Activated B cell treated with CpG ODN at 0.5 μM for 24 hours (primary cell): ENCODE measurements at regions of chr1 and their contacts with region 1.

Region 1: GRCh38 chr1:150578965-150579798 is at the start of gene MCL1:
- DNase-seq: peak; percentile 81
- ATAC-seq: peak; percentile 82
- H3K4me3 Mint-ChIP-seq: peak within 1 kb of the TSS; percentile 95
- H3K27ac Mint-ChIP-seq: peak within 1 kb of the TSS; percentile 98
- H3K4me1 Mint-ChIP-seq: peaks cover 49% of the 10 kb centered on the region
- H3K27me3 Mint-ChIP-seq: no peaks in the 10 kb centered on the region
- CTCF ChIP-seq: no peak
- total RNA-seq, gene MCL1: 224 and 233 TPM in 2 replicates

Region 2: DNA sequence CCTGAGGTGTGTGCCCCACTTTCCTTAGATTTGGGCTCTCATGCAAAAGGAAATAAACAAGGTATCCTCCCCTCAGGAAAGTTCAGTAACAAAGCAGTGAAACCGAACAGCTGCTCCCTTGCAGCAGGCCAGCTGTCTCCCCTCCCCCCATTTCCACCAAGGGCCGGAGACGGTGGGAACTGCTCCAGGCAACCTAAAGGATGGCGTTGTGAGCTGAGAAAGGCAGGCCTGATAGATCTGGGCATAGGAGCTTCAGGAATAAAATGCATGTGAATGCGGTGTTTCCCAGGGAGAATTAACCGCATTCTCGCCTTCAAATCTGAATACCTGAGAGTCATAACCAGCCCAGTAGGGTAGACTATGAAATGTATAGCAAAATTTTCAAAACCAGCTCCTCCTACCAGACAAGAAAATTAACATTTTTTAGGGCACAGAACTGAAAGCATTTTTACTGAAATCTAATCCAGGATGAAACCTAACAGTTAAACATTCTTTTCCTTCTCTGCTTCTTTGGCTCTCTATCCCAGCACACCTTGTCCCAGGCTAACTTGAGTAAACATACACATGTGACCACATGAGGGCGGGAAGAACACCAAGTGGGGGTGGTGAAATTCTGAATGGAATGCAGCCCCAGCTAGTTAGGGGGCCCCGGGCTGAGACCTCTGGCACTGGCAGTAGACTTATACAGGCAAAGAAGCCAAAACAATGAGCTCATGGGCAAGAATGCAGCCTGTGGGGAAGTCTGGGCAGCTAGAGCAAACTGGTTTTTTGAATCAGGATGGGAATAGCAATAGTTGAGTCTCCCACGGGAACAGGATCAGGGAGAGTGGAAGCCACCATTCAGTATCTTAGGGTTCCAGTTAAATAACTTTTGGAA is 11.2 kb before region 1 on chr1:
- CTCF ChIA-PET with region 1: interaction called, 196 read pairs
- POLR2A ChIA-PET with region 1: interaction called, 1,106 read pairs
- intact Hi-C with region 1: loop called (anchors 1 kb)
- DNase-seq: no peak
- ATAC-seq: no peak
- H3K4me3 Mint-ChIP-seq: peak overlapping the region; percentile 79
- H3K27ac Mint-ChIP-seq: peak overlapping the region; percentile 94
- H3K4me1 Mint-ChIP-seq: peaks cover 97% of the 10 kb centered on the region
- H3K27me3 Mint-ChIP-seq: no peaks in the 10 kb centered on the region
- CTCF ChIP-seq: no peak

Region 3: DNA sequence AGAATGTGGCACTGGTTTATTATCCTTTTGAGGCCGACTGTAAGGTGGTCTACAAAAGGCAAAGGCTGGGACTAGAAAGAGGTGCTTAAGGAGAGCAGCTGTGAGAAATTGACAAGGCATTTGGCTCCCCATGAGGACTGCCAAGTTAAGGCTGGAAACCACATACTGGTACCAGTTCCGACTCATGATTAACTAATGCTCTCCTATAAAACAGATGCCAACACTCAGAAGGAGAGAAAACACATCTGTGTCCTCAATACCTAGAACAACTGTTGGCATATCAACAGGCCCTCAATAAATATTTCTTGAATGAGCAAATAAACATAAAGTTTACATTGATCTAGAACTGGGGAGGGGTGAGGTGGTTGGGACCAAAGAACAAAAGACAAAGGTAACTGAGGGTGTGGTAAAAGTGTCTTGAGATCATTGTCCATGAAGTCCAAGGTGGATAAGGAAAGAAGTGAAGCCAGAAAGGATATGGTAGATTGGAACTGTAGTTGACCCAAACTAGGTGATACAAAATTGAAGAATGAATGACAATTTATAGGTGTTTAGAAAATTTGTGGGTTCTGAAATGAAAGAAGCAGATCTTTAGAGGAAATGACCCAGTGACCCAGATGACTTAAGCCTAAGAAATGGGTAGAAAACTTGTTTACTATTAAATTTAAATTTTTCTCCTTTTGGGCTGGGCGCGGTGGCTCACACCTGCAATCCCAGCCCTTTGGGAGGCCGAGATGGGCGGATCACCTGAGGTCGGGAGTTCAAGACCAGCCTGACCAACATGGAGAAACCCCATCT is 17.1 kb after region 1 on chr1:
- CTCF ChIA-PET with region 1: interaction called, 3 read pairs
- POLR2A ChIA-PET with region 1: interaction called, 12 read pairs
- intact Hi-C with region 1: no loop called
- DNase-seq: no peak
- ATAC-seq: no peak
- H3K4me3 Mint-ChIP-seq: no peak overlapping the region
- H3K27ac Mint-ChIP-seq: no peak overlapping the region
- H3K4me1 Mint-ChIP-seq: peaks cover 6% of the 10 kb centered on the region
- H3K27me3 Mint-ChIP-seq: no peaks in the 10 kb centered on the region
- CTCF ChIP-seq: no peak

Region 4: GRCh38 chr1:150603711-150604110 is 24.5 kb after region 1 on chr1:
- CTCF ChIA-PET with region 1: no interaction called
- POLR2A ChIA-PET with region 1: interaction called, 12 read pairs
- intact Hi-C with region 1: no loop called
- DNase-seq: no peak
- ATAC-seq: no peak
- H3K4me3 Mint-ChIP-seq: no peak overlapping the region
- H3K27ac Mint-ChIP-seq: no peak overlapping the region
- H3K4me1 Mint-ChIP-seq: peaks cover 6% of the 10 kb centered on the region
- H3K27me3 Mint-ChIP-seq: no peaks in the 10 kb centered on the region
- CTCF ChIP-seq: no peak

Region 5: DNA sequence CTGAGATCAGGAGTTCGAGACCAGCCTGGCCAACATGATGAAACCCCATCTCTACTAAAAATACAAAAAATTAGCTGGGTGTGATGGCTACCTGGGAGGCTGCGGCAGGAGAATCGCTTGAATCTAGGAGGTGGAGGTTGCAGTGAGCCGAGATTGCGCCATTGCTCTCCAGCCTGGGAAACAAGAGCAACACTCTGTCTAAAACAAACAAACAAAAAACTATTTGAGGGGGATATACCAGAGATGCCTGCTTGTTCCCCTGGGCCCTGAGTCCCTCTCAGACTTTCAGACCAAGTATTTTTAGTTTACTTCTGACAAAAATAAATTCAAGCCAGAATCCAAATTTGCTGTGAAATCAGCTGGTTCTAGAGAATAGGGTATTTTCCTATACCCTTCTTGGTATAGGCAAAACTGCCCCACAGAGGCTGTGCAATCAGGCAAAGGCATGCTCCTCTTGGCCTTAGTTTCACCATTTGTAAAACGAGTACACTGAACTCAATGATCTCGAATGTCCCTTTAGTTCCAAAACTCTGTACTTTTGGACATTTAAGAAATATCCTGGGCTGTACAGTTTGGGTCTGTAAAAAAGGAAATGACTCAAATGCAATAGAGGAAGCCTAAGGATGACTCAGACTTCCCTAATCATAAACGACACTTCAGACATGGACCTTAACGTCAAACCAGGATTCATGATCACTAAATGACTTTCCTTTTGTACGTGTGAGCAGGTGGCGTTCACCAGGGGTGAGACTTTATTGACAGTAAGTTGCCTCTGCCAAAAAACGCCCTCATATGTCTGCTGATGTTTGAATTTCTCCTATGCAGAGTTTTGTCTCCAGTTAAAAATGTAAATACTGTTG is 34.1 kb after region 1 on chr1:
- CTCF ChIA-PET with region 1: interaction called, 56 read pairs
- POLR2A ChIA-PET with region 1: interaction called, 65 read pairs
- intact Hi-C with region 1: loop called (anchors 1 kb)
- DNase-seq: no peak
- ATAC-seq: peak; percentile 53
- H3K4me3 Mint-ChIP-seq: peak overlapping the region; percentile 65
- H3K27ac Mint-ChIP-seq: peak overlapping the region; percentile 96
- H3K4me1 Mint-ChIP-seq: peaks cover 51% of the 10 kb centered on the region
- H3K27me3 Mint-ChIP-seq: no peaks in the 10 kb centered on the region
- CTCF ChIP-seq: no peak

Region 6: DNA sequence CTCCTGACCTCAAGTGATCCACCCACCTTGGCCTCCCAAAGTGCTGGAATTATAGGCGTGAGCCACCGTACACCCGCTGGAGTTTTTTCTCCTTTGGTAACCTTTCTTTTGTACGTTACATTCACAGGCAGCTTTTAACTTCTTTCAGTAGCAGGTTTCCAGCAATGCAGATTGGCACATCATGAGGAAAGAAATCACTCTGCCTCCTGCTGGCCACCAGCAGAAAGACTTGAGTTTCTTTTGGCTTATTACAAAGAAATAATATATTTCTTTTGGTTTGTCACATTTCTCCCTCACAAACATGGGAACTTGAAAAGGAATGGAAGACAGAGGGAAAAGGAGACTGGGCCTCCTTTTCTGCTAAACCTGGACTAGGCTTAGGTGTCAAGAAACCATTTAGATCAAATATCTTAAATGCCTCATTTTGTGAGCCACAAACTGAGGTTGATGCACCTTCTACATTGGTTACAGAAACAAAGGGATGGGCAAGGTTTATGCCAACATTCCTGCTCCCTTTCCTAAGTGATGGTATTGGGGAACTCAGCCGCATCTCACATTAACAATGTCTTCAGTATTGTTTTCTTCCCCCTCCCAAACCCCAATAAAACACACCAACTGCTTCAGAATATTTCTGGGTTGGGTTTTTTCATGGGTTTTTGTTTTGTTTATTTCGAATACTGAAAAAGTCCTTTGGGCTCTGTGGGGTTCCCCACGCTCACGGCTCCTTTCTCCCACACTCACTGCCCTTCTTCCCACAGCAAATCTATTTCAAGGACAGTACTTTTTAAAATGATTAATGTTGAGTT is 42.5 kb after region 1 on chr1:
- CTCF ChIA-PET with region 1: interaction called, 56 read pairs
- POLR2A ChIA-PET with region 1: interaction called, 65 read pairs
- intact Hi-C with region 1: loop called (anchors 1 kb)
- DNase-seq: no peak
- ATAC-seq: peak; percentile 82
- H3K4me3 Mint-ChIP-seq: peak overlapping the region; percentile 28
- H3K27ac Mint-ChIP-seq: peak overlapping the region; percentile 82
- H3K4me1 Mint-ChIP-seq: peaks cover 36% of the 10 kb centered on the region
- H3K27me3 Mint-ChIP-seq: no peaks in the 10 kb centered on the region
- CTCF ChIP-seq: no peak

Region 7: DNA sequence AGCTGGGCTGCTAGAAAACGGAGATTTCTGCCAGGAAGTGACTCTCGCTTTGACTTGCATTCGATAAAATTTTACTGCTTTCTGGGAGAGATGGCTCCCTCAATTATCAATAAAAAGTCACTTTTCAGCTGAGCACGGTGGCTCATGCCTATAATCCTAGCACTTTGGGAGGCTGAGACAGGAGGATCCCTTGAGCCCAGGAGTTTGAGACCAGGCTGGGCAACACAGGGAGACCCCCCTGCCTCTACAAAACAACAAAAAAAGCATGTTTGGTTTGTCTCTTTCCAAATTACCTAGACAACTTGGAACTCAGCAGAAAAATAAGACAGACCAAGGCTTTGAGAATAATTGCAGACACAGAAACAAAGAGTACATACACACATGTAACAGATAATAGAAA is 63.1 kb after region 1 on chr1:
- CTCF ChIA-PET with region 1: no interaction called
- POLR2A ChIA-PET with region 1: no interaction called
- intact Hi-C with region 1: no loop called
- DNase-seq: no peak
- ATAC-seq: no peak
- H3K4me3 Mint-ChIP-seq: no peak overlapping the region
- H3K27ac Mint-ChIP-seq: no peak overlapping the region
- H3K4me1 Mint-ChIP-seq: no peaks in the 10 kb centered on the region
- H3K27me3 Mint-ChIP-seq: no peaks in the 10 kb centered on the region
- CTCF ChIP-seq: no peak